ENCODE measurements at regions of chr1 and their contacts with region 1.

Region 1: GRCh38 chr1:26055041-26055440 is 9.1 kb upstream of the SLC30A2 start:
- DNase-seq: no peak
- H3K4me3 ChIP-seq: no peak overlapping the region
- H3K4me3 Mint-ChIP-seq: no peak overlapping the region
- H3K27ac ChIP-seq: no peak overlapping the region
- H3K27ac Mint-ChIP-seq: no peak overlapping the region
- H3K4me1 ChIP-seq: peaks cover 7 to 8% of the 10 kb centered on the region in 2 donors
- H3K4me1 Mint-ChIP-seq: peaks cover 9% of the 10 kb centered on the region
- H3K27me3 ChIP-seq: peaks cover 0 to 5% of the 10 kb centered on the region in 2 donors
- H3K27me3 Mint-ChIP-seq: peaks cover 22 to 46% (median 24%) of the 10 kb centered on the region in 3 donors
- CTCF ChIP-seq: no peak

Region 2: DNA sequence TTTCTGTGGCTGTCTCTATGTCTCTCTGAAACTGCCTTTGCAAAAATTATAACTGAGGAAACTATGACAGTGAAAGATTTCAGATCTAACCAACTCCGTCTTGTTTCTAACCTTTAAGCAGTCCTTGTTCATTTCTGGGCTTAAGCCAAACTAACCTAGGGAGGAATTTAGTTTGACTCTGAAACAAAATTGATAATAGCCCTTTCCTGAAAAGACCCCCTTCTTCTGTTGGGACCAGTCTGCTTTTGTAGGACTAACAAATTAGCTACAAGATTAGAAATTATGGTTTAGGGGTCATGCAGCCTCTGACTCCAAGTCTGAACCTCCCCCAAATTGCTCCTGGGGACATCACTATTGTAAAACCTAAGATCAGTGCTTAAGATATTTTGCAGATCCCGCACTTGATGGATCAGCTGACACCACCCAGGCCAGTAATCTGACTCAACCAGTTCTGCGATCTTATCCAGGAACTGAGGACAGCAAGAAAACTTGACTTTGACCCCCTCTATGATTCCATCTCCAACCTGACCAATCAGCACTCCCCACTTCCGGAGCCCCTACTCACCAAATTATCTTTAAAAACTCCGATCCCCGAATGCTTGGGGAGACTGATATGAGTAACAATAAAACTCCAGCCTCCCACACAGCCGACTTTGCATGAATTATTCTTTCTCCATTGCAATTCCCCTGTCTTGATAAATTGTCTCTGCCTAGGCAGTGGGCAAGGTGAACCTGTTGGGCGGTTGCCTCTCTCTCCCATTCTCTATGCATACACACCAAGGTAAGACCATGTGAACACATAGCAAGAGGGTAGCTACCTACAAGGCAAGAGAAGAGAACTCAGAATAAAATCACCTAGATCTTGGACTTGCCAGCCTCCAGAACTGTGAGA is 23.5 kb after region 1 on chr1:
- intact Hi-C with region 1: loop called in 1 of 2 experiments (anchors 1 kb)
- DNase-seq: no peak
- H3K4me3 ChIP-seq: no peak overlapping the region
- H3K4me3 Mint-ChIP-seq: no peak overlapping the region
- H3K27ac ChIP-seq: no peak overlapping the region
- H3K27ac Mint-ChIP-seq: peak overlapping the region in 2 of 7 donors; percentile 3 to 12
- H3K4me1 ChIP-seq: no peaks in the 10 kb centered on the region
- H3K4me1 Mint-ChIP-seq: peaks cover 1% of the 10 kb centered on the region
- H3K27me3 ChIP-seq: no peaks in the 10 kb centered on the region
- H3K27me3 Mint-ChIP-seq: peaks cover 8 to 28% (median 18%) of the 10 kb centered on the region in 3 donors
- CTCF ChIP-seq: no peak

Measured in CD14-positive monocyte (primary cell).